HCT116 (cell line): ENCODE measurements at regions of chr6 and their contacts with region 1.

Region 1: GRCh38 chr6:138115877-138116660 is 8.8 kb upstream of the PERP start:
- DNase-seq: peak; percentile 58
- ATAC-seq: peak; percentile 92
- H3K4me3 ChIP-seq: no peak overlapping the region; a peak in 1 of 4 replicates
- H3K27ac ChIP-seq: no peak overlapping the region
- H3K4me1 ChIP-seq: peaks cover 0 to 8% of the 10 kb centered on the region in 2 experiments; a peak in 1 of 4 replicates
- H3K27me3 ChIP-seq: no peaks in the 10 kb centered on the region
- CTCF ChIP-seq: peak; percentile 48 to 85 (median 78); a peak in 5 of 6 replicates
- POLR2A ChIP-seq: no peak
- RAD21 ChIP-seq: peak; percentile 94

Region 2: DNA sequence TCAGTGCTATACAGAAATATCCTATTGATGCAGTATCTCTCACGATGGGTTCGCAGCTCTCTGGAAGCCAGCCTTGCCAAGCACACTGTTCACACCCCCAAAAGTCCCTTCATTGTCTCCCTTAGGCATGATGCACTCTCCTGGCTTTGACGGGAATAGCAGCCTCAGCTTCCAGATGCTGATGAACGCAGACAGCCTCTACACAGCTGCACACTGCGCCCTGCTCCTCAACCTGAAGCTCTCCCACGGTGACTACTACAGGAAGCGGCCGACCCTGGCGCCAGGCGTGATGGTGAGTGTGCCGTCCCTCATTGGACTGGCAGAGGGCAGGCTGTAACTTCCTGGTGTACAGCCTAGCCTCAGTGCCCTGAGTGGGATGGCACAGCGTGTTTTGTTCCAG is 162.3 kb after region 1 on chr6:
- CTCF ChIA-PET with region 1: interaction called, 6 read pairs
- POLR2A ChIA-PET with region 1: no interaction called
- RAD21 ChIA-PET with region 1: interaction called in 1 of 2 experiments, 5 read pairs
- intact Hi-C with region 1: loop called (anchors 2 kb)
- DNase-seq: no peak
- ATAC-seq: peak; percentile 89
- H3K4me3 ChIP-seq: no peak overlapping the region
- H3K27ac ChIP-seq: no peak overlapping the region
- H3K4me1 ChIP-seq: no peaks in the 10 kb centered on the region
- H3K27me3 ChIP-seq: no peaks in the 10 kb centered on the region
- CTCF ChIP-seq: peak in 2 of 3 experiments; percentile 38 to 43; a peak in 4 of 6 replicates
- POLR2A ChIP-seq: no peak
- RAD21 ChIP-seq: no peak; the same call in 1 of the 2 replicates

Region 3: DNA sequence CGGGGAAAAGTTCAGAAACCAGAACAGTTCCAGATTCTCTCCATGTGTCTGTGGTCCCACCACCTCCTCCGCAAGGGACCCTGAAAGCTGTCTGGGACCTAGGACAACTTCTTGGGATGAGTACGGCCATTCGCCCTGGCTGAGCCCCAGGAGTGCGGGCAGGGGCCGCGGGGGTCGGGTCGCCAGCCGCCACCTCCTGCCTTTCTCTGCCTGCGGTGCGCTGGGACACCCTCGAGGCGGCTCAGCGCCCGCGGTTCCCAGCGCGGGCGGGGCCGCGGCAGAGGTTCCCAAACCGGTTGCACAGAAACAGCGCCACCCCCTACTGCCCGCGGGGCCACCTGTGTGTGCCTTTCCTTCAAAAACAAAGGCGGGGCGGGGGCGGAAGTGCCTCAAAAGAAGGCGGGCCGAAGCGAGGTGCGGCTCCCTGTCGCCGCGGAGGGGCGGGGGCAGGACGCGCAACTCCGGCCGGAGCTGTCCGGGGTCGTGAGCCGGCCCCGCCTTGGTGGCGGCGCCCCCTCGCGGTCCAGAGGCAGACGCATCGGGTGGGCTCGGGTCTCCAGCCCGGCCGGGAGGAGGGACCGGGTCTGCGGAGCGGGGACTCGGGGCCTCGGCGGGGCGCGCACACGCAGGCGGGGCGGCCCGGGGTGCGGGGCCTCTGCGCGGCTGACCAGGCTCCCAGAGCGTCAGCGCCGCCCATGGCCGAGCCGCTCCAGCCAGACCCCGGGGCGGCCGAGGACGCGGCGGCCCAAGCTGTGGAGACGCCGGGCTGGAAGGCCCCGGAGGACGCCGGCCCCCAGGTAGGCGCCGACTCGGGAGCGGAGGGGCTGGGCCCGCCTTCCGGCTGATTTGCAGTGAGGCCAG is 288.0 kb after region 1 on chr6 and contains the start of gene HEBP2:
- CTCF ChIA-PET with region 1: interaction called, 10 read pairs
- POLR2A ChIA-PET with region 1: no interaction called
- RAD21 ChIA-PET with region 1: no interaction called
- intact Hi-C with region 1: loop called (anchors 1 kb)
- DNase-seq: peak; percentile 89
- ATAC-seq: peak; percentile 93
- H3K4me3 ChIP-seq: peak within 1 kb of the TSS; percentile 77 to 84
- H3K27ac ChIP-seq: peak within 1 kb of the TSS; percentile 80
- H3K4me1 ChIP-seq: peaks cover 8 to 20% of the 10 kb centered on the region in 2 experiments; a peak in 3 of 4 replicates
- H3K27me3 ChIP-seq: no peaks in the 10 kb centered on the region
- CTCF ChIP-seq: peak; percentile 54 to 57 (median 54)
- POLR2A ChIP-seq: peak; percentile 39
- RAD21 ChIP-seq: peak; percentile 72
- total RNA-seq, gene HEBP2: 51.6 TPM

Region 4: GRCh38 chr6:138428944-138429598 is 313.0 kb after region 1 on chr6:
- CTCF ChIA-PET with region 1: no interaction called
- POLR2A ChIA-PET with region 1: no interaction called
- RAD21 ChIA-PET with region 1: no interaction called
- intact Hi-C with region 1: loop called (anchors 5 kb)
- DNase-seq: peak; percentile 21
- ATAC-seq: peak; percentile 72
- H3K4me3 ChIP-seq: no peak overlapping the region
- H3K27ac ChIP-seq: no peak overlapping the region
- H3K4me1 ChIP-seq: no peaks in the 10 kb centered on the region
- H3K27me3 ChIP-seq: no peaks in the 10 kb centered on the region
- CTCF ChIP-seq: peak; percentile 57 to 81 (median 75); a peak in 5 of 6 replicates
- POLR2A ChIP-seq: no peak
- RAD21 ChIP-seq: peak; percentile 87

Region 5: GRCh38 chr6:138509371-138509770 is 393.3 kb after region 1 on chr6:
- CTCF ChIA-PET with region 1: interaction called, 4 read pairs
- POLR2A ChIA-PET with region 1: no interaction called
- RAD21 ChIA-PET with region 1: no interaction called
- intact Hi-C with region 1: loop called (anchors 5 kb)
- DNase-seq: peak; percentile 44
- ATAC-seq: peak; percentile 73; the same call in 1 of the 2 replicates
- H3K4me3 ChIP-seq: no peak overlapping the region
- H3K27ac ChIP-seq: no peak overlapping the region
- H3K4me1 ChIP-seq: peaks cover 2 to 8% of the 10 kb centered on the region in 2 experiments; a peak in 2 of 4 replicates
- H3K27me3 ChIP-seq: no peaks in the 10 kb centered on the region
- CTCF ChIP-seq: peak; percentile 54 to 78 (median 71); a peak in 5 of 6 replicates
- POLR2A ChIP-seq: no peak
- RAD21 ChIP-seq: peak; percentile 85

Region 6: DNA sequence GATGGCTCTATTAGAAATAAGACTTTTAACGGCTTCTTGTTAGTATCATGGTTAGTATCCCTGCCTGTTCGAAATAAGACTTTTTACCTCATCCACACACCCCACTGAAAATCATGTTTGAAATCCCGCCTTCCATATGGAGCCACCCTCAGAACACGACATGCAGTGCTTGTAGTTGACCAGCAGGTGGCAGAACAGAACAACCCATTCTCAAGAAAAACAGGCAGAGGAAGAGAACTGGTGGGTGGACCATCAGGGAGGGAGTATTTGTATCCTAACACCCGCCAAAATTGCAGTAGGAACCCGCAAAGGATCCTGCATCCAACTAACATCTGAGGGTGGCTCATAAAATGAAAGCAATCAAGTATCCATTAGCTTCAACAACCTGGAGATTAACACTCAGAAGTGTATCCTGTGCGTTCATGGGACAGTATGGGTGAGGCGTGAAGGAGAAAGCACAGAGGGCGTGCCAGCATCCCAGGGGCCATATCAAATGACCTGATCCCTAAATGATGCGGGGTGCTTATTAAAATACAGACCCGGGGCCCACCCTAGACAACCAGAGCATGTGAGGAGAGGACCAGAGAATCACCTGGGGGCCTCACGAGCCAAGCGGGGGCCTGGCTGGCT is 472.9 kb after region 1 on chr6:
- CTCF ChIA-PET with region 1: interaction called, 3 read pairs
- POLR2A ChIA-PET with region 1: no interaction called
- RAD21 ChIA-PET with region 1: interaction called in 1 of 2 experiments, 3 read pairs
- intact Hi-C with region 1: loop called (anchors 5 kb)
- DNase-seq: peak; percentile 67
- ATAC-seq: peak; percentile 64
- H3K4me3 ChIP-seq: no peak overlapping the region
- H3K27ac ChIP-seq: no peak overlapping the region
- H3K4me1 ChIP-seq: peaks cover 6 to 25% of the 10 kb centered on the region in 2 experiments; a peak in 3 of 4 replicates
- H3K27me3 ChIP-seq: no peaks in the 10 kb centered on the region
- CTCF ChIP-seq: peak; percentile 76 to 94 (median 88); a peak in 5 of 6 replicates
- POLR2A ChIP-seq: no peak
- RAD21 ChIP-seq: peak; percentile 91

Region 7: GRCh38 chr6:138765896-138766655 is 650.0 kb after region 1 on chr6:
- CTCF ChIA-PET with region 1: interaction called, 4 read pairs
- POLR2A ChIA-PET with region 1: no interaction called
- RAD21 ChIA-PET with region 1: no interaction called
- intact Hi-C with region 1: loop called (anchors 2 kb)
- DNase-seq: peak; percentile 29
- ATAC-seq: peak; percentile 63; the same call in 1 of the 2 replicates
- H3K4me3 ChIP-seq: no peak overlapping the region
- H3K27ac ChIP-seq: no peak overlapping the region
- H3K4me1 ChIP-seq: no peaks in the 10 kb centered on the region
- H3K27me3 ChIP-seq: no peaks in the 10 kb centered on the region
- CTCF ChIP-seq: peak; percentile 49 to 84 (median 76)
- POLR2A ChIP-seq: no peak
- RAD21 ChIP-seq: peak; percentile 87